ENCODE measurements at regions of chr9 and their contacts with region 1.

Region 1: GRCh38 chr9:105007143-105007542 is 79.2 kb upstream of the ABCA1 start:
- DNase-seq: peak in 1 of 2 donors; percentile 8
- ATAC-seq: peak in 7 of 8 donors; percentile 48 to 79 (median 63)
- H3K4me3 ChIP-seq: peak overlapping the region in 1 of 10 donors; percentile 0
- H3K27ac ChIP-seq: peak overlapping the region in 2 of 10 donors; percentile 17 to 87
- H3K4me1 ChIP-seq: peaks cover 0 to 35% (median 0%) of the 10 kb centered on the region in 9 donors
- H3K27me3 ChIP-seq: no peaks in the 10 kb centered on the region
- CTCF ChIP-seq: no peak

Region 2: GRCh38 chr9:104429031-104429546 is 578.1 kb before region 1 on chr9:
- intact Hi-C with region 1: no loop called
- DNase-seq: no peak
- ATAC-seq: no peak
- H3K4me3 ChIP-seq: no peak overlapping the region
- H3K27ac ChIP-seq: no peak overlapping the region
- H3K4me1 ChIP-seq: no peaks in the 10 kb centered on the region
- H3K27me3 ChIP-seq: no peaks in the 10 kb centered on the region
- CTCF ChIP-seq: no peak

Region 3: DNA sequence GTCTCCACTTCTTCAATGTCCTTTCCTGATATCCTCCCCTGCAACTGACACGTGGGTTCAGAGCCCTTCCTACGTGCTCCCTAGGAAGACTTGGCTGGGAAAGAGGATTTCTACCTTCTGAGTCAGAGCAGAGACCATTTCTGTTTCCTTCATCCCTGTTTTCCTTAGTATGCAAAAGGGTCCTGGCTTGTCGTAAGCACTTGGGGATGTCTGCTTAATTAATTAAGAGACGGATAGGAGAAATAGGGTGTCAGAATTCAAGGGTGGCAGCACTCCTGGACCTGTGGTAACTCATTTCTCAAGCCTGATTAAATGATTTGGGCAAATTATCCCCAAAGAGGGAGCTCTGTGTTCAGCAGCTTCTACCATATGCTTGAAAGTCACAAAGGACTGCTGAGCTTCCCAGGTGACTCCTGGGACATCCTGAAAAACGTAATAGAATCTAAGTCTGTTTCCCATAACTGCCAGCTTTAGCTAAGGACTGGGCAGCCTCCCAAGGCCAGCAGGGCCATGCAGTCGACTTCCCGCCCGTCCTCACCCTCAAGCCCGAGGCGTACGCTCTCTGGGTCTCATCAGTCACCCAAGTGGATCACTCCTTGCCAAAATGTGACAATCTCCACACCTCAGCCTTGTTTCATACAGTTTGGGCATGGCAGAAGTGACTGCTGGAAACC is 99.7 kb before region 1 on chr9:
- intact Hi-C with region 1: no loop called
- DNase-seq: peak; percentile 19 to 30
- ATAC-seq: peak in 7 of 8 donors; percentile 31 to 76 (median 55)
- H3K4me3 ChIP-seq: no peak overlapping the region
- H3K27ac ChIP-seq: peak overlapping the region in 9 of 10 donors; percentile 22 to 82 (median 66)
- H3K4me1 ChIP-seq: peaks cover 19 to 97% (median 84%) of the 10 kb centered on the region in 9 donors
- H3K27me3 ChIP-seq: no peaks in the 10 kb centered on the region
- CTCF ChIP-seq: no peak

Region 4: GRCh38 chr9:105053209-105053652 is 46.1 kb after region 1 on chr9:
- intact Hi-C with region 1: loop called in 1 of 10 experiments (anchors 10 kb)
- DNase-seq: no peak
- ATAC-seq: peak in 1 of 8 donors; percentile 57
- H3K4me3 ChIP-seq: no peak overlapping the region
- H3K27ac ChIP-seq: peak overlapping the region in 1 of 10 donors; percentile 81
- H3K4me1 ChIP-seq: peaks cover 0 to 30% (median 0%) of the 10 kb centered on the region in 9 donors
- H3K27me3 ChIP-seq: no peaks in the 10 kb centered on the region
- CTCF ChIP-seq: no peak

Region 5: DNA sequence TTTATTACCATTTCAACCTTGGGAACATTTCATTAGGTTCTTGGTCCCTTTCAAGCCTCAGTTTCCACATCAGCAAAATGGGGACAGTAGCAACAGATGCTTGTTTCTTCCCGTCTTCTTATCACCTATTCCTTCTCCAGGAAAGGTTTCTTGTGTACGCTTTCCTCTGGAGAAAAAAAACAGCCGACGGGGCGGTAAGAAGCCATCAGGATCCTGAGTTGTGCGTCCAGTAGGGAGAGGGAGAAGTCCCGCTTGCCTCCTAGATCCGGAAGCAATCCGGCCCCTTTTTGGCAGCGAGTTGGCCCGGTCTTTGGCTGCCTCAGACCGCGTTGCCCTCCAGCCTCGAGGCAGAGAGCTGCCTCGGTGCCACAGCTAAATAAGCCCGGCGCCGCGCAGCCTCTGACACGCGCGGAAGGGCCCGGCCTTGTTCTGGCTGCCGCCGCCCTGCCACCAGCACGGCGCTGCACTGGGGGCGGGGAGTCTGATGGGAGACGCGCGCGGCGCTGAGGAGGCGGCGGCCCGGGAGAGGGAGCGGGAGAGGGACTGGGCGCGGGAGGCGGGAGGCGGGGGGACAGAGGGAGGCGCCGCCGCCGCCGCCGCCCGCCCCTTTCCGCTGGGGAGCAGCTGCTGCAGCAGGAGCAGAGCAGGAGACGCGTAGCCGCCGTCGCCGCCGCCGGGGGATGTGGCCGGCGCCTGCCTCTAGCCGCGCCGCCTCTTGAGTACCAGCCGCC is 237.0 kb after region 1 on chr9 and contains the start of gene SLC44A1:
- intact Hi-C with region 1: no loop called
- DNase-seq: peak; percentile 97 to 99
- ATAC-seq: peak; percentile 98 to 100 (median 98)
- H3K4me3 ChIP-seq: peak within 1 kb of the TSS; percentile 62 to 91 (median 84)
- H3K27ac ChIP-seq: peak within 1 kb of the TSS; percentile 73 to 89 (median 80)
- H3K4me1 ChIP-seq: peaks cover 0 to 61% (median 43%) of the 10 kb centered on the region in 9 donors
- H3K27me3 ChIP-seq: no peaks in the 10 kb centered on the region
- CTCF ChIP-seq: peak in 3 of 9 donors; percentile 9 to 29 (median 26)
- total RNA-seq, gene SLC44A1: 12.6 to 29.0 (median 19.0) TPM